Prostate gland (tissue), 2 donors: ENCODE measurements at regions of chr3 and their contacts with region 1.

Region 1: DNA sequence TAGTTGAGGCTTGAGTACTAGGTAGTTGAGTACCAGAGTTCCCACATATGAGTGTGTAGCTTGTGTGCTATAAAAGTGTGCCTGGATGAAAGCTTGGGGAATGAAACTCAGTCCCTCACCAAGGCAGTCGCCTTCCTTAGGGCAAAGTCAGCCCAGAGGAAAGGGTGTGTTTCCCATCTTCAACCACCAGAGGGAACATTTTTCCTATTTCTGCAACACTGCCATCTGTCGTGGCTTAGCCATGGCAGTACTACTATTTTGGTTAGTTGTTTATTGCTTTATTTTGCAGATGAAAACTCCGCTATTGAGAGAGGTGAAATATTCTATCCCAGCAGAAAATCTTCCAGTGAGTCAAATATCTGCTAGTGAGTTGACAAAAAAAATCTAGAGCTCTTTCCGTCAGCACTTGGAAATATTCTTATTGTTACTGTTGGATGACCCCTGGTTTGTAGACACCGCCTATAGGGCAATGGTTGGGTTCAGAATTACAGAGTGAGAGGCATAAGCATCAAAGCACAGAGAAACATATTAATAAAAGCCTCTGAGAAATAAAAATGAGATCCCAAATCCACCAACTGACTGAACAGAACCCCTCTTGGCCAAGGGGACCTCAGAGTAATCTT is 239.9 kb downstream of the CPNE4 start:
- DNase-seq: peak; percentile 16
- H3K4me3 ChIP-seq: no peak overlapping the region
- H3K27ac ChIP-seq: no peak overlapping the region
- H3K4me1 ChIP-seq: no peaks in the 10 kb centered on the region
- H3K27me3 ChIP-seq: no peaks in the 10 kb centered on the region
- CTCF ChIP-seq: peak; percentile 54 to 76 (median 70)
- POLR2A ChIP-seq: no peak

Region 2: GRCh38 chr3:131158434-131158833 is 636.4 kb before region 1 on chr3:
- intact Hi-C with region 1: no loop called
- DNase-seq: no peak
- H3K4me3 ChIP-seq: no peak overlapping the region
- H3K27ac ChIP-seq: no peak overlapping the region
- H3K4me1 ChIP-seq: no peaks in the 10 kb centered on the region
- H3K27me3 ChIP-seq: no peaks in the 10 kb centered on the region
- CTCF ChIP-seq: no peak
- POLR2A ChIP-seq: no peak

Region 3: DNA sequence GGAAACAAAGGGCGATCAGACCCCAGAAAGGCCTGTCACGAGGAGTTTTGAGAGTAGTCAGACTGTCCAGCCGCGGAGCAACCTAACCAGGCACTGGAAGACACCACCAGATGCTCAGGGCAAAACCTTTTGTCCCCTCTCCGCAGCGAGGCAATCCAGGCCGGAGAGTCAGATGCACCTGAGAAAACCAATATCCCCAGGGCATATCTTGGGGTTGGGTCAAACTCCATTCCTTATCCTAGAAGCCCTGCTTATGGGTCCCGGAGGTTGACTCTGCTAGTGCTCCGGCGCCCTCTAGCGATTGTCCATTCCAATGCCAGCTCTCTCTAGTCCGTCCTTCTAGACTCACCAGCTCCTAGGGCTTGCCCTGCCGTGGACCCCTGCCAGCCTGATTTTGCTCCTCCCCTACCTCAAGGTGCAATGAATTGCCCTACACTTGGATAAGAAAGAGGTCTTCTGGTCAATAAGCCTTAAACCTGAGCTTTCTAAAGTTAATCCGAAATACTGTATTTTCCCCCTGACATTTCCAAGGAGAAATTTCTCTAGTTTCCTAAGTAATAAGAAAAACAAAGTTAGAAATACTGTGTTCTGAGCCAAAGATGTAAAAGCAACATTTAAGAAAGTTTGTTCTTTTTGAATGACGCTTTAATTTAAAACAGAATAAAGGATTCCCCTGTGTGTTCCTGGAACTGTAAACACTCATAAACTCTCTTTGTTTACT is 234.5 kb after region 1 on chr3:
- intact Hi-C with region 1: loop called (anchors 2 kb)
- DNase-seq: peak; percentile 84
- H3K4me3 ChIP-seq: peak overlapping the region in 1 of 2 donors; percentile 7
- H3K27ac ChIP-seq: peak overlapping the region in 1 of 2 donors; percentile 82
- H3K4me1 ChIP-seq: no peaks in the 10 kb centered on the region
- H3K27me3 ChIP-seq: no peaks in the 10 kb centered on the region
- CTCF ChIP-seq: peak; percentile 45 to 71 (median 66)
- POLR2A ChIP-seq: no peak

Region 4: GRCh38 chr3:132042681-132043080 is 247.8 kb after region 1 on chr3:
- intact Hi-C with region 1: no loop called
- DNase-seq: no peak
- H3K4me3 ChIP-seq: no peak overlapping the region
- H3K27ac ChIP-seq: no peak overlapping the region
- H3K4me1 ChIP-seq: no peaks in the 10 kb centered on the region
- H3K27me3 ChIP-seq: no peaks in the 10 kb centered on the region
- CTCF ChIP-seq: no peak
- POLR2A ChIP-seq: no peak

Region 5: DNA sequence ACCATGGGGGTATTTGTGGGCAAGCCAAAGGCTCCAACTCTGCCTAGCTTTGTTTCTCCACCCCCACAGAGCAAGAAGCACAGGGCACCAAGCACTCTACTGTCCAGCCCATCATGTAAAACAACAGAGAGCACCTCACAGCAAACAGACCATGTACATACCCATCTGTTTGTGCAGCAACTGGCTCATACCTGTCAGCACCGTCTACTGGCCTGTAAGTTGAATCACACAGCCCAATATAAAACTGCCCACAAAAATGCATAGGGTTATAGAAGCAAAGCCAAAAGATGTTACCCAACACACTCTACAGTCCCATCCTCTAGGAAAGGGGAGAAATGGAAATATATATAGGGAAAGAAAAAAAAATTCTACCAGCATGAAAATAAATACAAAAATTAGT is 379.6 kb after region 1 on chr3:
- intact Hi-C with region 1: loop called (anchors 10 kb)
- DNase-seq: no peak
- H3K4me3 ChIP-seq: no peak overlapping the region
- H3K27ac ChIP-seq: no peak overlapping the region
- H3K4me1 ChIP-seq: no peaks in the 10 kb centered on the region
- H3K27me3 ChIP-seq: no peaks in the 10 kb centered on the region
- CTCF ChIP-seq: no peak
- POLR2A ChIP-seq: no peak

Region 6: GRCh38 chr3:132317229-132317948 is 522.5 kb after region 1 on chr3 and contains the start of gene ACP3:
- intact Hi-C with region 1: no loop called
- DNase-seq: peak; percentile 69
- H3K4me3 ChIP-seq: peak within 1 kb of the TSS; percentile 30 to 39
- H3K27ac ChIP-seq: peak within 1 kb of the TSS; percentile 89 to 90
- H3K4me1 ChIP-seq: no peaks in the 10 kb centered on the region
- H3K27me3 ChIP-seq: no peaks in the 10 kb centered on the region
- CTCF ChIP-seq: peak in 2 of 4 experiments; percentile 11 to 22
- POLR2A ChIP-seq: peak; percentile 12
- total RNA-seq, gene ACP3: 1,778 to 14,359 TPM